IMR-90 (cell line): ENCODE measurements at regions of chr4 and their contacts with region 1.

Region 1: DNA sequence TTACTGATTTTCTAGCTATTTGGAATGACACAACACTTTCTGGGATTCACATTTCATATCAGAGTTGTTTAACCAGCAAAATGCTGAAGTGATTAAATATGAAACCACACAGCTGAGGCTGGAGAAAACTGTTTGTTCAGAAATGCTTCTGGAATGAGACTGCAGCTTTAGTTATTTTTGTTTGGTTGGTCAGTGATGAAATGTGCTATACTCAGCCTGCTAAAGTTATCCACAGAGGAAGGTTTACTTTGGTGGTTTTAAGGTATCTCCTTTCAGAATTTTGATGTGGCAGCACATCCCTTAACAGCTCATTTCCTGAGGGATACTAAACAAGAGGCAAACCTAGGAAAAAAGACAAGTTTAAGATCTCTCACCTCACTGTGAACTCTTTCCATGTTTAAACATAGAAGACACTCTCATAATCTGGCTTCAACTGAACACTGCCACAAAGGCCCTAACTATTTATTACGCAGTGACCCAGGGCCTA is 106.6 kb upstream of the PDE5A start:
- DNase-seq: peak; percentile 99
- ATAC-seq: peak; percentile 76
- H3K4me3 ChIP-seq: no peak overlapping the region
- H3K27ac ChIP-seq: no peak overlapping the region
- H3K4me1 ChIP-seq: peaks cover 32% of the 10 kb centered on the region
- H3K27me3 ChIP-seq: no peaks in the 10 kb centered on the region
- CTCF ChIP-seq: no peak
- POLR2A ChIP-seq: no peak
- RAD21 ChIP-seq: no peak; the same call in 1 of the 2 replicates

Region 2: DNA sequence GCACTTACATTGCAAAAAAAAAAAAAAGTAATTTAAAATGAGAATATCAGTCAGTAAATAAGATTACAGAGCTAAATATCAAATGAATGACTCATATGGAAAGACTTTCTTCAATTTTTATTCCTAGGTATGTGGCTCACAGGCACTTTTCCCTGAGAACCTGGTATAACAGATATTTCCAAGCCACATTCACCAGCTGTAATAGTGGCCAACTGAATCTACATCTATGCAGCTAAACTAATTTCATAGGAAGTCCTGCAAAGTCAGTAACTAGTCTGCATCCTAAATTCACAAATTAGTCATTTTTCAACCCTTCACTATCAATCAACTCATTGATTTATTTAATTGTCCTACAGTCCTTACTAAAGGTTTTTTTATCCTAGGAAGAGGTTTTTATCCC is 112.2 kb before region 1 on chr4:
- CTCF ChIA-PET with region 1: no interaction called
- POLR2A ChIA-PET with region 1: interaction called, 47 read pairs
- dilution Hi-C with region 1: no loop called
- in situ Hi-C with region 1: no loop called
- intact Hi-C with region 1: loop called (anchors 1 kb)
- DNase-seq: peak; percentile 55
- ATAC-seq: no peak
- H3K4me3 ChIP-seq: peak overlapping the region; percentile 37
- H3K27ac ChIP-seq: peak overlapping the region; percentile 53; the same call in 1 of the 2 replicates
- H3K4me1 ChIP-seq: peaks cover 8% of the 10 kb centered on the region
- H3K27me3 ChIP-seq: no peaks in the 10 kb centered on the region
- CTCF ChIP-seq: no peak
- POLR2A ChIP-seq: no peak
- RAD21 ChIP-seq: no peak

Region 3: DNA sequence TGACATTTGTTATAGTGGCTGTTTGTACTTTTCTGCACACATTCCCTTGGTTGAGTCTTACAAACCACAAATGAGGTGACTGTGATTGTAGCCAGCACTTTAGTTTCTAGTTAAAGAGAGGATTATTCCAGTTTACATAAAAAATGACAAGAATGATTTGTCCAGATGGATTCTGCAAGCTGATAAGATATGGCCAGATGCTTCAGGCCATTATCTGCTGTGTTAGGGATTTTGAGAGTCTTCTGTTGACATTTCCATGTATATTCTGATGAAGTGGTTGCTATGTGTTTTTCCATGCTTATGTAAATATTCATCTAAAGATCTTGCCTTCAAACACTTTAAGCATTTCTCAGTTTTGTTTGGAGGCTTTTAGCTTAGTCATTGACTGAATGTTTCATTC is 75.6 kb before region 1 on chr4:
- CTCF ChIA-PET with region 1: interaction called, 3 read pairs
- POLR2A ChIA-PET with region 1: interaction called, 20 read pairs
- dilution Hi-C with region 1: no loop called
- in situ Hi-C with region 1: no loop called
- intact Hi-C with region 1: loop called (anchors 2 kb)
- DNase-seq: peak; percentile 94
- ATAC-seq: peak; percentile 58
- H3K4me3 ChIP-seq: no peak overlapping the region
- H3K27ac ChIP-seq: no peak overlapping the region; the same call in 1 of the 2 replicates
- H3K4me1 ChIP-seq: peaks cover 22% of the 10 kb centered on the region
- H3K27me3 ChIP-seq: no peaks in the 10 kb centered on the region
- CTCF ChIP-seq: no peak
- POLR2A ChIP-seq: no peak
- RAD21 ChIP-seq: no peak

Region 4: DNA sequence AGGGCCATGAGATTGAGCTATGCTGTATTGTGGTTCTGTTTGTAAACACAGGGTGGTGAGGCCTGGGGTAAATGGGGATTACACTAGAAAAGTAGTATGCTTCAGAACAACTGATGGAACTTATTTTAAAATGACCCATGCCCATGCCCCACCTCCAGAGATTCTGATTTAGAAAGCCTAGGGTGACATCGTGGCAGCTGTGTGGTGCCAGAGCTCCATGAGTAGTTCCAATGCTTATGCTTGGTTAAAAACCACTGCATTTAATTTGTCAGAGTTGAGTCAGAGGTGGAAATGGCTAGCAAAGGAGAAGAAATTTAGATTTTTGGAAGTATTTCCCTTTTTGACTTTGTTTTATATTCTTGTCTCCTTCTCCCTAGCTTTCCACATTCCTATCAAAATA is 43.2 kb before region 1 on chr4:
- CTCF ChIA-PET with region 1: interaction called, 9 read pairs
- POLR2A ChIA-PET with region 1: no interaction called
- dilution Hi-C with region 1: no loop called
- in situ Hi-C with region 1: no loop called
- intact Hi-C with region 1: loop called (anchors 2 kb)
- DNase-seq: peak; percentile 67
- ATAC-seq: peak; percentile 62
- H3K4me3 ChIP-seq: no peak overlapping the region
- H3K27ac ChIP-seq: peak overlapping the region; percentile 36; the same call in 1 of the 2 replicates
- H3K4me1 ChIP-seq: peaks cover 9% of the 10 kb centered on the region
- H3K27me3 ChIP-seq: no peaks in the 10 kb centered on the region
- CTCF ChIP-seq: peak; percentile 51
- POLR2A ChIP-seq: no peak
- RAD21 ChIP-seq: peak; percentile 63

Region 5: GRCh38 chr4:120049732-120050494 is 314.7 kb after region 1 on chr4:
- CTCF ChIA-PET with region 1: interaction called, 3 read pairs
- POLR2A ChIA-PET with region 1: interaction called, 3 read pairs
- dilution Hi-C with region 1: no loop called
- in situ Hi-C with region 1: no loop called
- intact Hi-C with region 1: loop called (anchors 1 kb)
- DNase-seq: peak; percentile 92
- ATAC-seq: peak; percentile 84
- H3K4me3 ChIP-seq: peak overlapping the region; percentile 21; the same call in 1 of the 2 replicates
- H3K27ac ChIP-seq: peak overlapping the region; percentile 85
- H3K4me1 ChIP-seq: peaks cover 4% of the 10 kb centered on the region
- H3K27me3 ChIP-seq: no peaks in the 10 kb centered on the region
- CTCF ChIP-seq: peak; percentile 87
- POLR2A ChIP-seq: no peak
- RAD21 ChIP-seq: peak; percentile 95